ENCODE measurements at regions of chr4 and their contacts with region 1.

Region 1: DNA sequence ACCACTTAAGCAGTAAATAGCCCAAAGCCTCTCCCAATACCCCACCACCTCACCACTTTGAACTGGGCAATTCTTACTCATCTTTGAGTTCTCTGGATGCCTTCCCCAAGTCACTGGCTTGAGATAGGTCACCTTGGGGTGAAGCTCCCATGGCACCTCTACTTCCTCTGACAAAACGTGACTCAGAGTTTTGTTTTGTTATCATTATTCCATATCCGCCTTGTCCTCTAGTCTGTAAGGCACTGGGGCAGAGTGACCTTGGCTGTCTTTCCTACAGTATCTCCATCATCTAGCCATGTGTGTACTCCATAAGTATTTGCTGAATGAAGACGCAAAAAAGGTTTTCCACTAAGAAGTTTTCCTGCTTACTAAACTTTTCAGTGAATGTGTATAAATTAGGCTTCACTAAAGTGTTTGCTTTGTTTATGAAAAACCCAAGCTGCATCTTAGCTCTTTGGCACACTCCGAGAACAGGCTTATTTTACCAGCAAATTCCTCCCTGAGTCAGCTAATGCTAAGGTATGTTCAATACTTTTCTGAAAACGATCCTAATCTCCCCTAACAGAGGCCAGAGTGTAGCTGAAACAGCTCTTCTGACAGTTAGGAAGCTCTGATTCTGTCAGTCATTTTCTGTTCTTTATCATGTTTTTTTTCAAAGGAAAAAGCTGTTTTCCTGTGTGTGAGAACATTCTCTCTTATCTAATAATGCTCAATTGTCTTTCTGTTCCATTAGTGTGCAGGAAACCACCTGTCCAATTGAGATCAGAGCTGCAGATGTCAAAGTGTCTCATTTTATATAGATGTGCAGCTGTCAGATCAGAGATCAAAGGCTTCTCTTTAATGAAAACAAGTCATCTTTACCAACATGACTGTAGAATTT is 30.2 kb upstream of the TSPAN5 start:
- DNase-seq: peak in 7 of 9 donors; percentile 12 to 63 (median 45)
- ATAC-seq: peak; percentile 71
- H3K4me3 ChIP-seq: no peak overlapping the region
- H3K4me3 Mint-ChIP-seq: peak overlapping the region; percentile 31 to 69 (median 60)
- H3K27ac ChIP-seq: no peak overlapping the region
- H3K27ac Mint-ChIP-seq: peak overlapping the region; percentile 22 to 84 (median 71)
- H3K4me1 ChIP-seq: peaks cover 14 to 36% of the 10 kb centered on the region in 2 donors
- H3K4me1 Mint-ChIP-seq: peaks cover 21 to 71% (median 53%) of the 10 kb centered on the region in 7 donors
- H3K27me3 ChIP-seq: no peaks in the 10 kb centered on the region
- H3K27me3 Mint-ChIP-seq: no peaks in the 10 kb centered on the region

Region 2: GRCh38 chr4:98672583-98673287 is 15.9 kb before region 1 on chr4:
- CTCF ChIA-PET with region 1: no interaction called
- POLR2A ChIA-PET with region 1: interaction called, 3 read pairs
- intact Hi-C with region 1: loop called in 1 of 2 experiments (anchors 2 kb)
- DNase-seq: no peak
- ATAC-seq: no peak
- H3K4me3 ChIP-seq: no peak overlapping the region
- H3K4me3 Mint-ChIP-seq: peak overlapping the region in 7 of 10 donors; percentile 2 to 54 (median 24)
- H3K27ac ChIP-seq: no peak overlapping the region
- H3K27ac Mint-ChIP-seq: peak overlapping the region in 1 of 9 donors; percentile 52
- H3K4me1 ChIP-seq: peaks cover 0 to 8% of the 10 kb centered on the region in 2 donors
- H3K4me1 Mint-ChIP-seq: peaks cover 7 to 21% (median 15%) of the 10 kb centered on the region in 7 donors
- H3K27me3 ChIP-seq: no peaks in the 10 kb centered on the region
- H3K27me3 Mint-ChIP-seq: peaks cover 0 to 4% (median 0%) of the 10 kb centered on the region in 5 donors

Region 3: DNA sequence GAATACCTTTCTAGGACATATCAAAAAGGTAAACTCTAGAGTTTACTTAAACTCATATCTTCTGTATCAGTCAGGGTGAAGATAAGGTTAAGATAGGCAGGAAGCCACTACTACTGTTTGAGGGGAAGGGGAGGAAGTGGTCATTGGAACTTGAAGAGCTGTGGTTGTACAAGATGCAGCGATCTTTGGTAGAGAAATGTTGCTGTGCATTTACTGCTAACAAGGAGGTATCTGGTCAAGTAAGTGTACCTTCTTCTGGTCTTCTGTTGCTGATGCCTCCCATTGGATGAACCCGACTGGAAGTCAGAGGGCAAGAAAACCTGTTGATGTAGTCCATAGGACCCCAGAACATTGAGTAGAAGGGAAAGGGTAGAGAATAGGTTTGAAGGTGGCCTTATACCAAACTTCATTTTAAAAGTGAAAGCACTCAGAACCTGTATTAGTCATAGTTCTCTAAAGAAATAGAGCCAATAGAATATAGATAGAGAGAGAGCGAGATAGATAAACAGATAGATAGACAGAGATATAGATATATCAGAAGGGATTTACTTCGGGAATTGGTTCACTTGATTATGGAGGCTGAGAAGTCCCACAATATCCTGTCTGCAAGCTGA is 17.7 kb after region 1 on chr4:
- CTCF ChIA-PET with region 1: no interaction called
- POLR2A ChIA-PET with region 1: interaction called, 4 read pairs
- intact Hi-C with region 1: loop called in 1 of 2 experiments (anchors 1 kb)
- DNase-seq: peak in 7 of 9 donors; percentile 21 to 76 (median 71)
- ATAC-seq: peak; percentile 96
- H3K4me3 ChIP-seq: peak overlapping the region; percentile 37
- H3K4me3 Mint-ChIP-seq: peak overlapping the region; percentile 74 to 87 (median 80)
- H3K27ac ChIP-seq: no peak overlapping the region
- H3K27ac Mint-ChIP-seq: peak overlapping the region; percentile 40 to 93 (median 81)
- H3K4me1 ChIP-seq: peaks cover 29 to 30% of the 10 kb centered on the region in 2 donors
- H3K4me1 Mint-ChIP-seq: peaks cover 24 to 50% (median 41%) of the 10 kb centered on the region in 7 donors
- H3K27me3 ChIP-seq: no peaks in the 10 kb centered on the region
- H3K27me3 Mint-ChIP-seq: no peaks in the 10 kb centered on the region

Measured in naive thymus-derived CD4-positive, alpha-beta T cell (primary cell).